Activated naive CD8-positive, alpha-beta T cell treated with anti-CD3 and anti-CD28 coated beads, Interleukin-2, amount 10 ng/mL, durations not matched to agents 7 days and 5 days (primary cell): ENCODE measurements at regions of chr19 and their contacts with region 1.

Region 1: GRCh38 chr19:14505488-14506432 is 9.8 kb upstream of the GIPC1 start:
- DNase-seq: peak; percentile 88
- ATAC-seq: peak; percentile 48
- H3K4me3 Mint-ChIP-seq: peak overlapping the region; percentile 77
- H3K27ac Mint-ChIP-seq: peak overlapping the region; percentile 92
- H3K4me1 Mint-ChIP-seq: peaks cover 40% of the 10 kb centered on the region
- H3K27me3 Mint-ChIP-seq: peaks cover 4% of the 10 kb centered on the region

Region 2: GRCh38 chr19:14117668-14118164 is 388.0 kb before region 1 on chr19 and contains the start of gene PRKACA:
- POLR2A ChIA-PET with region 1: no interaction called
- DNase-seq: peak; percentile 99
- ATAC-seq: peak; percentile 98
- H3K4me3 Mint-ChIP-seq: peak within 1 kb of the TSS; percentile 98
- H3K27ac Mint-ChIP-seq: peak within 1 kb of the TSS; percentile 88
- H3K4me1 Mint-ChIP-seq: peaks cover 40% of the 10 kb centered on the region
- H3K27me3 Mint-ChIP-seq: no peaks in the 10 kb centered on the region
- total RNA-seq, gene PRKACA: 64.1 to 66.9 TPM

Region 3: DNA sequence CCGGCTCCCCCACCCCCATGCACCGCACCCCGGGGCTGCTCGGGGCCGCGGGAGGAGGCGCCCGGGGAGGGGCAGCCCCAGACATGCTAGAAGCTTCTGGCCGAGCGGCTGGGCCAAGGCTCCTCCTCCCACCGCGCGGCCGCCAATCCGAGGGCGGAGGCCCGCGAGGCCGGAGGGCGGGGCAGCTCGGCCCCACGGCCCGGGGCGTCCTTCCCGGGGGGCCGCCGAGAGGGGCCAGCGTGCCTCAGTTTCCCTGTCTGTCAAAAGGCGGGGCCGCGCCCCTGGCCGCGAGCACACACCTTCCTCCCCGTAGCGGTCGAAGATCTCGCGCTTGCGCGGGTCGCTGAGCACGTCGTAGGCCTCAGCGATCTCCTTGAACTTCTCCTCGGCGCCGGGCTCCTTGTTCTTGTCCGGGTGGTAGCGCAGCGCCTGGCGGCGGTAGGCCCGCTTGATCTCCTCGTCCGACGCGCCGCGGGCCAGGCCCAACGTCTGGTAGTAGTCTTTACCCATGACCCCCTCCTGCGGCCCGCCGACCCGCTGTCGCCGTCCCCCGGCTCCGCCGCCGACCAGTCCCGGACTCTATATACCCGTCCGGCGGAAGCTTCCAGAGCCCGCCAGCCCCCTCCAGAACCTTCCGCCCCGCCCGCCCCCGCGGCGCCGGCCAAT is 12.2 kb after region 1 on chr19 and contains the start of gene DNAJB1:
- POLR2A ChIA-PET with region 1: interaction called, 298 read pairs
- DNase-seq: peak; percentile 85
- ATAC-seq: peak; percentile 62
- H3K4me3 Mint-ChIP-seq: peak within 1 kb of the TSS; percentile 92
- H3K27ac Mint-ChIP-seq: peak within 1 kb of the TSS; percentile 97
- H3K4me1 Mint-ChIP-seq: peaks cover 60% of the 10 kb centered on the region
- H3K27me3 Mint-ChIP-seq: no peaks in the 10 kb centered on the region
- total RNA-seq, gene DNAJB1: 103 to 110 TPM

Region 4: GRCh38 chr19:14529254-14530004 is 23.7 kb after region 1 on chr19 and contains the start of gene TECR:
- POLR2A ChIA-PET with region 1: interaction called, 16 read pairs
- DNase-seq: peak; percentile 100
- ATAC-seq: peak; percentile 97
- H3K4me3 Mint-ChIP-seq: peak within 1 kb of the TSS; percentile 97
- H3K27ac Mint-ChIP-seq: peak within 1 kb of the TSS; percentile 96
- H3K4me1 Mint-ChIP-seq: peaks cover 13% of the 10 kb centered on the region
- H3K27me3 Mint-ChIP-seq: no peaks in the 10 kb centered on the region
- total RNA-seq, gene TECR: 161 to 168 TPM

Region 5: DNA sequence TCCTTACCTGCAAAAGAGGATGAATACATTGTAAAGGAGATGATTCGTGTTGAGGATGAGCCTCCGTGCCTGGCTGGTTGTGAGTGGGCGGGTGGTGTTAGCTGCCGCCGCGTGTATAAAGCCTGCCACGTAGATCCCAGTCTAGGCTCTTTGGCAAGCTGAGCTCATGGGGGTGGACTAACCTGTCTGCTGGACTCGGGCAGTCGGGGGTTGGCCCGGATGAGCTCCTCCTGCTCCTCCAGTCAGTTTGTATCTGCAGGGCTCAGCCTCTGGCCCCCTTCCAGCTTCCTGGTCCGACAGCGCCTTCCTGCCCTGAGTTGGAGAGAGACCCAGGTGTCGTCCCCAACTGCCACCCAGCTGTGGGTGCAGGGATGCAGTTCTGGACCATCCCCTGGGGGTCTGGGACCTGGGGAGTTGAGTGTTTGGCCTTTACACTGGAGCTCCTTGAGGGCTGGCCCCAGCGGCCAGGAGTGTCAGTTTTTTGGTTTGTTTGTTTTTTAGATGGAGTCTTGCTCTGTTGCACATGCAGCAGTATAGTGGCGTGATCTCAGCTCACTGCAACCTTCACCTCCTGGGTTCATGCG is 44.5 kb after region 1 on chr19:
- POLR2A ChIA-PET with region 1: interaction called, 10 read pairs
- DNase-seq: no peak
- ATAC-seq: no peak
- H3K4me3 Mint-ChIP-seq: no peak overlapping the region
- H3K27ac Mint-ChIP-seq: no peak overlapping the region
- H3K4me1 Mint-ChIP-seq: peaks cover 10% of the 10 kb centered on the region
- H3K27me3 Mint-ChIP-seq: no peaks in the 10 kb centered on the region